Posterior cingulate gyrus (tissue), 11 donors: ENCODE measurements at regions of chr2 and their contacts with region 1.

Region 1: DNA sequence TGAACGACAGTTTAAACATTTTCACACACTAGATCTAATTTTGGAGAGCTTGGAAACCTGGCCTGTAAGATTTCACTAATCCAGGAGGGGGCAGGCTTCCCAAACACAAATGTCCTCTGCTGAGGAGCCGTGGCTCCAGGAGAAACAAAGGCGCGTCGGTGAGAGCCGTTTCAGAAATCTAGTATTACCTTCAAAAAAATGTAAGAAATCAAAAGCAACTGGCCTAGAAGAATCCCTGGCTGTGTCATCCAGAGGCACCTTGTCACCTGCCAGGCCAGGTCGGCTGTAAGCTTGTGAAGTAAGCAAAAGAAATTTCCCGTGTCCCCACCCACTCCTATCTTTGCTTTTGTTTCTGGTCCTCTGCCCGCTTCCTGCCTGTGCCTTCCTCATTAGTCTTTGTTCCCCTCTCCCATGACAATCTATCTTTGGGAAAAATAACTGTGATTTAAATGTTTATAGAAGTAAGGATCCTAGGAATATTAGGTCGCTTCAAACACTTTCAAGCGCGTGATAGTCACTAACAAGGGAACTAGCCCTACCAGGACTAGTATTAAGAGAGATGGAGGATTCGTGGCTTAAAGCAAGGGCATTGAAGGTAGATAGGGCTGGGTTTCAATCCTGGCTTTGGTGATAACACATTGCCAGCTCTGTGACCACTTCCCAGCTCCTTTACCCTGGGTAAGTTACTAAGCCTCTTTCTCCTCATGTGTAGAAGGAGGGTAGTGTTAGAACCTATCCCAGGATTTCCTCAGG is 99.5 kb upstream of the STK39 start:
- DNase-seq: peak; percentile 16 to 93 (median 69)

Region 2: DNA sequence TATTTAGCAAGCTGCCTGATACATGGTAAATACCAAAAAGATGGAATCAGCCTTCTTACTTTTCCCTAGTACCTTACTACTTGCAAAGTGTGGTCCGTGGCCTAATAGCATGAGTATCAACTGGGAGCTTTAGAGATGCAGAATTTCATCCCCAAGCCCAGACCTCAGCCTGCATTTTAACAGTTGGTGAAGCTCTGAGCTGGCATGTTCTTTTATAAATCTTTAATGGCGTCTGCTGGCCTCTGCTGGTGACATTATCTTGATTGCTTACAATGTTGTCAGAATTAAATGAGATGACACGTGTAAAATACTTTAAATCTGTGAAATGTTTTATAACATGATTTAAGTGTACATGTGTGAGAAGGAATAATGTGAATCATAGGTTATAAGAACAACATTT is 340.4 kb after region 1 on chr2:
- intact Hi-C with region 1: loop called (anchors 5 kb)
- DNase-seq: peak in 1 of 10 donors; percentile 26

Region 3: DNA sequence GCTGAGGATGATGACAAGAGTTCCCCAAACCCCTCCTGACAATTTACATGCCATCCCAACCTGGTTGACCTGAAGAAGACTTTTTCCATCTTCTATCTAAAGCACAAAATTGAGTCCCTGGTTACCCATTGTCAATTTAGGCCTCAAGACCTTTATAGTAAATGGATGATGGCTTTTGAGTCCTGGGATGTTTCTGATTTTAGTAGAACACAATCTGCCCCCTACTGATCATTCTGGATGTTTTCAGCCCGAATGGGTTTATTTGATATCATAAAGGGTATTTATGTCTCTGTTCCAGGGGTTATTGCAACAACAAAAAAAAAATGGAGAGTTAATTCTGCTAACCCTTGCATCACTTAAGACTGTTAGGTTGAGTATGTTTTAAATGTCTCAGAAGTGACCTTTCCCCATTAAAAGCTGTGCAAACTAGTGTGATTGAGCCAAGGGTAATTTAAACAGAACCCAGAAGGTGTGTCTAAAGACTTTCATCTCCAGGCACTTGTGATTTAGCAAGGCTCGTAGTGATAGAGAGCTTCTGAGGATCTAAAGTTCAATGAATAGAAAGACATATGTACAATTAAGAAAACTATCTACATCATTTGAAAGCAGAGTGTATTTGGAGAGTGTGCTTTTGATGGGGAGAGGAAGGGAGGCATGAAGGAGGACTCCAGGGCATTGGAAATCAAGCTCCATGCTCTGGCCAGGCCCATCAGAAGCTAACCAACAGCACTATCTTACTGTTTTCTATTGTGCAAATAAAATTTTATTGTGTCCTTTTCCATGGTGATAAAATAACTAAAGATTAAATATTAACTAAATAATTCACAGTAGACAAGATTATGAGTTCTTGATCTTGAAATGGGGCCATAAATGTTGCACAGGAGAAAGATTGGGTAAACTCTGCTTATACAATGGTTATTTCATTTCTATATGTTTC is 358.9 kb after region 1 on chr2:
- intact Hi-C with region 1: loop called (anchors 1 kb)
- DNase-seq: no peak

Region 4: DNA sequence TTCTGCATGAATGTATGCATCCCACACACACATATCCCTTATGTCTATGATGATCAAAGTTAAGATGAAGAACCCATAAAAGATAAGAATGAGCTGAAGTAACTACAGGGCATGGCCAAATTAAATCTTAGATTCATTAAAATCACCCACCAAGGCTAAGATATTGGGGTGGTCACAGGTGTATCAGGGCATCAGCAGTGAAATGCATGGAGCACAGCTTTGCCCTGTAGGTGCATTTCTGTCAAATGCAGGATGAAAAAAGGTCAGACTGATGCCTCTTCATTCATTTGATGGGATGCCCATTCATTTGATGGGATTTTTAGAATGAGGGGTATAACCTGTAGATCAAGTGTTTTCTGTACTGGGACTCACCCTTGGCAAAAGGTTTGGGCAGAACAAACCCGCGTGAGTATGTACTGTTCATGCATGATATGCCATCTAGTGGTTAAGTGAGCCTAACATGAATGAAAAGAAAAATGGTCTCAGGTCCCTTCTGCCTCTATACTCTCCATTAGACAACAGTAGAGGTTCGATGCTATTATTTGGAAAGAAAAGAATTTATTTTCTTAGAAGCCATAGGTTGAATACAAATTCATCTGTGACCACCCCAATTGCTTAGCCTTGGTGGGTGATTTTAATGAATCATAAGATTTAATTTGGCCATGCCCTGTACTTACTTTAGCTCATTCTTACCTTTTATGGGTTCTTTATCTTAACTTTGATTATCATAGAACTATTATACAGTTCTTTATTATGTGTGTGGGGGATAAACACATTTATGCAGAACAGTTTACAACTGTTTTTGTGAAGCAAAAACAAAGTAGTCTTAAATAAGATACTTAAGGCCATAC is 412.3 kb after region 1 on chr2:
- intact Hi-C with region 1: loop called (anchors 2 kb)
- DNase-seq: no peak

Region 5: DNA sequence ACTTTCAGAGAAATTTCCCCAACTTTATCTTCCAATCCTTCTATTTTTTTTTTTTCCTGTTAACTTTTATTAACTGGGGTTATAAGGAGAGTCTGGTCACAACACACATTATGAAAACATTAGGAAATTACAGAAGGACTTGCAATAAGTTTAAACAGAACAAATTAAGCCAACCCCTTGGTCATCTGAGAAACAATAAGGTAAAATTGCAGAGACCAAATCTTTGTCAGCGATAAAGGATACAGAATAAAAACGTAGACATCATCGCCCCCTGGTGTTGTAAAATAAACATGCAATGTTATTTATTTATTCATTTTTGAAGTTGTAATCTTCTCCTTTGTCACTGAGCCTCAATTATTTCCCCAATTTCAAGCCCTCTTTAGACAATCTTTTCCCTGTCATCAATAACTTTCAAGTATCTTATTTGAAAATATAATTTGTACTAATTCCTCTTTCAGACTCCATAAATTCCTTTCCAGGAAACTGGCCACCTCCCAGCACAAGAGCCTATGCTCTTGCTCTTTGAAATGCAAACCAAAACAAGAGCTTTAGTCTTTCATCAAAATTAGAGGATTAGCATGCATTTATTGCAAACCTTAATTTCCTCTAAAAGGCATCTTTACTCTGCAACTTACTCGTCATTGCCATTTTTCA is 573.7 kb after region 1 on chr2:
- intact Hi-C with region 1: loop called (anchors 10 kb)
- DNase-seq: no peak